MCF 10A (cell line): ENCODE measurements at regions of chr14 and their contacts with region 1.

Region 1: GRCh38 chr14:24093901-24094761 is at the start of gene PCK2:
- DNase-seq: peak; percentile 97
- H3K4me3 Mint-ChIP-seq: peak within 1 kb of the TSS; percentile 97
- H3K27ac Mint-ChIP-seq: peak within 1 kb of the TSS; percentile 92
- H3K4me1 Mint-ChIP-seq: peaks cover 19% of the 10 kb centered on the region
- H3K27me3 Mint-ChIP-seq: no peaks in the 10 kb centered on the region
- CTCF ChIP-seq: no peak
- total RNA-seq, gene PCK2: 64.7 and 112 TPM in 2 replicates

Region 2: GRCh38 chr14:24013654-24014514 is 80.2 kb before region 1 on chr14:
- CTCF ChIA-PET with region 1: interaction called, 25 read pairs
- POLR2A ChIA-PET with region 1: interaction called, 4 read pairs
- intact Hi-C with region 1: loop called (anchors 1 kb)
- DNase-seq: peak; percentile 83
- H3K4me3 Mint-ChIP-seq: no peak overlapping the region
- H3K27ac Mint-ChIP-seq: no peak overlapping the region
- H3K4me1 Mint-ChIP-seq: no peaks in the 10 kb centered on the region
- H3K27me3 Mint-ChIP-seq: peaks cover 20% of the 10 kb centered on the region
- CTCF ChIP-seq: peak; percentile 80

Region 3: DNA sequence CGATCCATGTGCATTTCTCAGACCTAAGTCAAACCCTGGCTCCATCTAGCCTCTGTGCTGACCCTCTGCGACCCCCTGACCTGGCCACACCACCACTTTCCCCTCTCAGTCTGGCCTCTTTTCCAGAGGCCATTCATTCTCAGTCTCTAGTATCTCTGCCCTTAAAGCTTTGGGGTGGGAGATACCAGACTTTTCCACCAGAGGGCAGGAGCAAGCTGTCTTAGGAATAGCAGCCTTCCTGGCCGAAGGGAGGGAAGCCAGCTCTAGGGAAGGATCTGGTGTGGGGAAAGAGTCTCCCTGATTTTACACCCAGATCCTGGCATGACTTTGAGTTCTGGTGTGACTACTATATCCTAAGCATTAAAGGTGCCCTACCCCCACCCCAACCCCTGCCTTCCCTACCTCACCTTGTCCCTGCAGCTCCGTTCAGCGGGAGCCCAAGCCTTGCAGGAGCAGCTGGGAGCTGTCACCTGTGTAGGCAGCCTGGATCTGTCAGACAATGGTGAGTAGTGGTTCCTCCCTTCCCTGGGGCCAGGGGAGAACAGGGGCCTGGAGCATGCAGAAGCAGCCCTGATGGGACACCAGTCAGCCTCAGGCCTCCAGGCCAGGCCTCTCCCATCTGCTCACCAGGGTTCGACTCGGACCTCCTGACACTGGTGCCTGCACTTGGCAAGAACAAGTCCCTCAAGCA is 35.7 kb before region 1 on chr14:
- CTCF ChIA-PET with region 1: interaction called, 61 read pairs
- POLR2A ChIA-PET with region 1: no interaction called
- intact Hi-C with region 1: loop called (anchors 1 kb)
- DNase-seq: peak; percentile 66
- H3K4me3 Mint-ChIP-seq: no peak overlapping the region
- H3K27ac Mint-ChIP-seq: no peak overlapping the region
- H3K4me1 Mint-ChIP-seq: peaks cover 4% of the 10 kb centered on the region
- H3K27me3 Mint-ChIP-seq: peaks cover 48% of the 10 kb centered on the region
- CTCF ChIP-seq: peak; percentile 49

Region 4: GRCh38 chr14:24080888-24081738 is 13.0 kb before region 1 on chr14:
- CTCF ChIA-PET with region 1: interaction called, 58 read pairs
- POLR2A ChIA-PET with region 1: interaction called, 5 read pairs
- intact Hi-C with region 1: no loop called
- DNase-seq: peak; percentile 29
- H3K4me3 Mint-ChIP-seq: peak overlapping the region; percentile 74
- H3K27ac Mint-ChIP-seq: no peak overlapping the region
- H3K4me1 Mint-ChIP-seq: no peaks in the 10 kb centered on the region
- H3K27me3 Mint-ChIP-seq: peaks cover 25% of the 10 kb centered on the region
- CTCF ChIP-seq: no peak

Region 5: GRCh38 chr14:24114536-24115450 is 20.7 kb after region 1 on chr14 and contains the starts of genes DCAF11 and NRL:
- CTCF ChIA-PET with region 1: interaction called, 272 read pairs
- POLR2A ChIA-PET with region 1: interaction called, 90 read pairs
- intact Hi-C with region 1: loop called (anchors 2 kb)
- DNase-seq: peak; percentile 100
- H3K4me3 Mint-ChIP-seq: peak within 1 kb of the TSS; percentile 97
- H3K27ac Mint-ChIP-seq: peak within 1 kb of the TSS; percentile 99
- H3K4me1 Mint-ChIP-seq: peaks cover 9% of the 10 kb centered on the region
- H3K27me3 Mint-ChIP-seq: no peaks in the 10 kb centered on the region
- CTCF ChIP-seq: no peak
- total RNA-seq, gene DCAF11: 38.6 and 48.8 TPM in 2 replicates
- total RNA-seq, gene NRL: 1.3 and 2.1 TPM in 2 replicates

Region 6: DNA sequence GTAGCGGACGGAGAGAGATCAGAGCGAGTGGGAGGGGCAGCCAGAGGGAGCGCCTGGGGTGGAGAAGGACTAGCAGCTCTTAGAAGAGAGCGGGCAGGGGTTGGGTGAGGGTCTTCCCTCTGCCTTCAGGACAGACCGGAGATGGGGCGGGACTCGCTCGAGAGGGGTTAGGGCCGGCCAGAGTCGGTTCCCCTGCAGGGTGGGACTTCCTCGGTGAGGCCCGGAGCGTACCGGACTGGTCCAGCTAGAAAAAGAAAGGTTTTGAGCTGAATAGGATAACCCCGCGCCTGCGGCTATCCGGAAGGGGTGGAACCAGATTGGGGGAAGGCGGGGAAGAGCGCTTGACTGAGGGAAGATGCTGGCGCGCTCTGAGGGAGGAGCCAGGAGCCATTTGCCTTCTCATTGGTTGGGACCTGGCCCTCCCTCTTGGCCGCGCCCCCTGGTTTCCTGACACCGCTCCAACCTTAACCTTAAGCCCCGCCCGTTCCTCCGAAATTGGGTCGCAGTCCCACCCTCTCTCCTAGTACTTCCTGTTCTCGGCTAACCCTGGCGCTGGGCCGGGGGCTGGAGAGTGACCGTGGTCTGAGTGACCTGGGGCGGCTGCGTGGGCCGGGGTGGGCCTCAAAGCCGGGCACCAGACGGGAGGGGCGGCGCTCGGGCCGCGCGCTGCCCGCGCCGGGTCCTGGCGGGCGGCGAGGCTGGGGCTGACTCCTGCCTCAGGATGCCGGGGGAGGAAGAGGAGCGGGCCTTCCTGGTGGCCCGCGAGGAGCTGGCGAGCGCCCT is 53.0 kb after region 1 on chr14 and contains the start of gene RNF31:
- CTCF ChIA-PET with region 1: interaction called, 3 read pairs
- POLR2A ChIA-PET with region 1: interaction called, 10 read pairs
- intact Hi-C with region 1: loop called (anchors 2 kb)
- DNase-seq: peak; percentile 99
- H3K4me3 Mint-ChIP-seq: peak within 1 kb of the TSS; percentile 98
- H3K27ac Mint-ChIP-seq: peak within 1 kb of the TSS; percentile 61
- H3K4me1 Mint-ChIP-seq: peaks cover under 1% of the 10 kb centered on the region
- H3K27me3 Mint-ChIP-seq: no peaks in the 10 kb centered on the region
- CTCF ChIP-seq: no peak
- total RNA-seq, gene RNF31: 62.2 and 67.4 TPM in 2 replicates

Region 7: GRCh38 chr14:24224618-24225071 is 130.5 kb after region 1 on chr14:
- CTCF ChIA-PET with region 1: no interaction called
- POLR2A ChIA-PET with region 1: no interaction called
- intact Hi-C with region 1: no loop called
- DNase-seq: peak; percentile 54
- H3K4me3 Mint-ChIP-seq: peak overlapping the region; percentile 43
- H3K27ac Mint-ChIP-seq: peak overlapping the region; percentile 73
- H3K4me1 Mint-ChIP-seq: peaks cover 20% of the 10 kb centered on the region
- H3K27me3 Mint-ChIP-seq: no peaks in the 10 kb centered on the region
- CTCF ChIP-seq: no peak

Region 8: GRCh38 chr14:24351517-24351916 is 257.4 kb after region 1 on chr14:
- CTCF ChIA-PET with region 1: no interaction called
- POLR2A ChIA-PET with region 1: no interaction called
- intact Hi-C with region 1: no loop called
- DNase-seq: peak; percentile 45
- H3K4me3 Mint-ChIP-seq: no peak overlapping the region
- H3K27ac Mint-ChIP-seq: no peak overlapping the region
- H3K4me1 Mint-ChIP-seq: peaks cover 18% of the 10 kb centered on the region
- H3K27me3 Mint-ChIP-seq: peaks cover 16% of the 10 kb centered on the region
- CTCF ChIP-seq: no peak